Heart right ventricle (tissue), 16 donors: ENCODE measurements at regions of chr4 and their contacts with region 1.

Region 1: DNA sequence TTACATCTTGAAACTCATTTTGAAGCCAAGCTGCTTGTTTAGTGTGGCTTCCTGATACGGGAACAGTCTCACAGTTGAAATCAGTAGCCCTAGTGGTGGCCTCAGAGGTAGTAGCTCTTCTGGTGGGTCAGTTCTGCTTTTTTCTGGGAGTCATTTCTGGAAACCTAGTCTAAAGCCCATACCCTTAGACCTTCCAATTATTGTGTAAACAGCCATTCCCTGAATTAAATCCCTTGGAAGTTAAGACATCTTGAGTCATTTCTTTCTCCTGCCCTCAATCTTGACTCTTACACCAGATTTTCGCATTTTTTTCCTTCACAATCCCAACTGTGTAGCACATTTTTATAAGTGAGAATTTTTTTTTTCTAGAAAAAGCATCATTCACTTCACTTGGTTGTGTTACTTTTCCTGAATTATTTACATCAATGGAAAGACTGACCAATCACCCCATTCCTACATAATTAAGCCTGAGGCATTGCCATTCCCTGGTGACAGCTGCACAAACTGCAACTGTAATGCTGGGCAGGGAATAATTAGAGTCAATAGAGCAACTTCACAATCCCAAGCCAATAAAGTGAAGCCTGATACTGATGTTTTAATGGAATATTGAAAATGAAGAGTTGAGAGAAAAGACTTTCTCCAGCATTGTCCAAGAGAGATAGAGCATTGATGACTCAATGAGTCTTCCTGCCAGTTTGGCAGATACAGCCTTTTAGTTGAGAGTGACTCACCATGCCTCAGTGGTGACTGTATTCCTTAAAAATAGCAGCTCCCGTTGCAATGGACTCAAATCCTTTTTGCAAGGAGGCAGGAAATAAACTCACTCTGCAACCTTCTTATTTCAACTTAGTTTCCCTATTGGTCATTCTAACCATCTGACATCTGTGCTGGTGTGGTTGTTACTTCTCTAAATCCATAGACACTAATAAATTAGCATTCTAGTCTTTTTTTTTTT is 13.0 kb upstream of the SEPSECS start:
- DNase-seq: peak in 1 of 2 donors; percentile 77
- ATAC-seq: peak; percentile 95 to 98 (median 96)
- H3K4me3 ChIP-seq: no peak overlapping the region
- H3K27ac ChIP-seq: peak overlapping the region in 9 of 10 donors; percentile 49 to 85 (median 78)
- H3K4me1 ChIP-seq: peaks cover 0 to 40% (median 21%) of the 10 kb centered on the region in 9 donors
- H3K27me3 ChIP-seq: no peaks in the 10 kb centered on the region
- CTCF ChIP-seq: peak in 1 of 9 donors; percentile 19

Region 2: DNA sequence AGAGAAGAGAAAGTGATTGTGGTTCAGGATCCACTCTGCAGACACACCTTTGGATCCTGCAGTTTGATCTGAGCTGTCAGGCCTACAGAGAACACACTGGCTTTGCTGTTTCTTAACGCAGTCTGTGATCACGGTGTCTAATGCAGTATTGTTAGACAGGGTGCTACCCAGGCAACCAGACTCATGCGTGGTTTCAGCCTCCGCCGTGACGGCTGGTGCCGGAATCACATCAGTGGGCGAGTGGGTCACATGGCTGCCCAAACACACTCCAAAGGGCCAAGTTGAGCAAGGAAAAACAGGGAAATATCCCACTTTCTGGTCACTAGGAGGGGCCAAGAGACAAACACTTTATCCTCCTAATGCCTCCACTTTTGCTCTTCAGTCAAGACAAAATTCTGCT is 287.9 kb before region 1 on chr4:
- intact Hi-C with region 1: no loop called
- DNase-seq: no peak
- ATAC-seq: peak in 5 of 8 donors; percentile 34 to 47 (median 37)
- H3K4me3 ChIP-seq: no peak overlapping the region
- H3K27ac ChIP-seq: no peak overlapping the region
- H3K4me1 ChIP-seq: peaks cover 0 to 8% (median 0%) of the 10 kb centered on the region in 9 donors
- H3K27me3 ChIP-seq: no peaks in the 10 kb centered on the region
- CTCF ChIP-seq: no peak

Region 3: GRCh38 chr4:25312496-25313200 is 139.4 kb after region 1 on chr4 and contains the start of gene ZCCHC4:
- intact Hi-C with region 1: loop called in 5 of 10 experiments (anchors 10 kb)
- DNase-seq: peak; percentile 90
- ATAC-seq: peak; percentile 96 to 99 (median 99)
- H3K4me3 ChIP-seq: peak within 1 kb of the TSS; percentile 64 to 93 (median 75)
- H3K27ac ChIP-seq: peak within 1 kb of the TSS in 9 of 10 donors; percentile 32 to 87 (median 69)
- H3K4me1 ChIP-seq: peaks cover 2 to 26% (median 8%) of the 10 kb centered on the region in 9 donors
- H3K27me3 ChIP-seq: no peaks in the 10 kb centered on the region
- CTCF ChIP-seq: peak in 8 of 9 donors; percentile 96 to 100 (median 99)
- total RNA-seq, gene ZCCHC4: 6.8 to 9.6 (median 7.5) TPM

Region 4: GRCh38 chr4:25330905-25331808 is 157.9 kb after region 1 on chr4:
- intact Hi-C with region 1: no loop called
- DNase-seq: no peak
- ATAC-seq: no peak
- H3K4me3 ChIP-seq: peak overlapping the region in 1 of 10 donors; percentile 18
- H3K27ac ChIP-seq: peak overlapping the region in 1 of 10 donors; percentile 66
- H3K4me1 ChIP-seq: peaks cover 0 to 14% (median 0%) of the 10 kb centered on the region in 9 donors
- H3K27me3 ChIP-seq: no peaks in the 10 kb centered on the region
- CTCF ChIP-seq: no peak

Region 5: DNA sequence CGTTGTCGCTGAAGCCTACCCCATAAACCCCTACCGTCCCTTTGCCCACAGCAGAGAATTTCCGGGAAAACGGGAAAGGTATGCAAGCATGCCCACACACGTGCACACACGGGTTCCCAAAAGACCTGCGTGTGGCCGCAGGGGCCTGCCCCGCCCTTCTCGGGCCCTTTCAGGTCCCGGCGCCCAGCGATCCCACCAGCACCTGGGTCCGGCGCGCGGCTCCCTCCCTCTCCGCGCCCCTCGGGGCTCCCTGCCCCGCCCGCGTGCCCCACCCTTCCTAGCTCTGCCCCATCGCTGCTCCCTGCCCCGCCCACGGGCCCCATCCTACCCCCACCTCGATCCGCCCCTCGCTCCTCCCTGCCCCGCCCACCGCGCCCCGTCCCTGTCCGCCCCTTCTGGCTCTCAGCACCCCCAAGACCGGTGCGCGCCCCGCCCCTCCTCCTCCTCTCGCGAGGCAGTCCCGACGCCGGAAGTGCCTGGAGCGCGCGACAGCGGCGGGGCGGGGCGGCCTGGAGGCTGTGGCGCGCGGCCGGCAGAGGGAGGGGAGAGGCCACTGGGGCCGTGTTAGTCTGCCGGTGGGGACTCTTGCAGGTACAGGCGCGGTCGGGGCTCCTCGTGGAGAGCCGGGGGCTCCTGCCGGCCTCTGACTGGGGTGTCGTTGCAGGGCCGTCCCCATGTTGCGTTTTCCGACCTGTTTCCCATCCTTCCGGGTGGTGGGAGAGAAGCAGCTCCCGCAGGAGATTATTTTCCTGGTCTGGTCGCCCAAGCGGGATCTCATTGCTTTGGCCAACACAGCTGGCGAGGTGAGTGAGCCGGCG is 203.7 kb after region 1 on chr4 and contains the start of gene ANAPC4:
- intact Hi-C with region 1: loop called in 2 of 10 experiments (anchors 10 kb)
- DNase-seq: peak; percentile 94 to 98
- ATAC-seq: peak; percentile 97 to 99 (median 98)
- H3K4me3 ChIP-seq: peak within 1 kb of the TSS; percentile 68 to 98 (median 90)
- H3K27ac ChIP-seq: peak within 1 kb of the TSS; percentile 22 to 90 (median 78)
- H3K4me1 ChIP-seq: peaks cover 0 to 33% (median 17%) of the 10 kb centered on the region in 9 donors
- H3K27me3 ChIP-seq: no peaks in the 10 kb centered on the region
- CTCF ChIP-seq: peak in 4 of 9 donors; percentile 18 to 32 (median 28)
- total RNA-seq, gene ANAPC4: 9.9 to 13.8 (median 11.5) TPM